Psoas muscle (tissue), 8 donors: ENCODE measurements at regions of chr6 and their contacts with region 1.

Region 1: DNA sequence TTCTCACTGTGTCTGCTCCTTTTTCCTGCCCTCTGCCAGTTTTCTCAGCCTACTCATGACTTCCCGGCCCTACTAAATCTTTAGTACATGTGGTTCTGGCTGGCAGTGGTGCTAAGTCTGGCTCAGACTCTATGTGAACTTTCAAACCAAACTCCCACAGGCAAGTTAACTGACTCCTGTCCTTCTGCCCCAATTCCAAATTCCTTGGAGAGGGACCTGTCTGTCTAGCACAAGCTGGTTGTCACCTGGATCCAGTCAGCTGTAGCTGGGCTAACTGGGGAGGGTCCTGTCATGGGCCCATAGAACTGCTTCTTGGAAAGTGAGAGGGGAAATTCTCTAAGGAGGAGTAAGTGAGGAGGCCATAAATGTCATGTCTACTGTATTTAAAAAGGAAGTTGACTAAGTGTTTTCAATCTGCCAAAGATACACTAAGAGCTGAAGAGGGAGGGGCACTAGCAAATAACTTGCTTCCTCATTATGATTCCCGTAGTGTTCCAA is 240.1 kb downstream of the KCNQ5 start:
- DNase-seq: peak; percentile 44 to 66
- ATAC-seq: peak; percentile 76 to 87 (median 80)
- H3K4me3 ChIP-seq: no peak overlapping the region
- H3K27ac ChIP-seq: peak overlapping the region; percentile 86
- H3K4me1 ChIP-seq: peaks cover 58% of the 10 kb centered on the region
- H3K27me3 ChIP-seq: no peaks in the 10 kb centered on the region
- CTCF ChIP-seq: no peak

Region 2: DNA sequence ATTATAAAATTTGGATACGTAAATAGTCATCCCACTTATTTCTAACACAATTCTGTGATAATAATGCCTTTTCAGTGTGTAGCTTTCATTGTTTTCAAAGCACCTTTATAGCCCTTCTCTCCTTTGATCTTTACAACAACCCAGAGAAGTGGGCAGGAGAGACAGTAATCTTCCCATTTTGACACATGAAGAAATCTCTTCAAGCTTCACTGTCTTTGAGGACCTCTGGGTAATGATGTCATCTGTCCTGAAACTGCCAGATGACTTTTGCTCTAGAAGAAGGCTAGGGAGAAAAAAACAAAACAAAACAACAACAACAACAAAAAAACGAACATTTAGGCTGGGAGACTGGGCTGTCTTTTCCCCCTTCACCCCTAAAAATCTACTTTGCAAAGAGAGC is 37.2 kb before region 1 on chr6:
- intact Hi-C with region 1: loop called in 1 of 2 experiments (anchors 2 kb)
- DNase-seq: no peak
- ATAC-seq: peak in 1 of 4 donors; percentile 35
- H3K4me3 ChIP-seq: no peak overlapping the region
- H3K27ac ChIP-seq: peak overlapping the region; percentile 64
- H3K4me1 ChIP-seq: peaks cover 75% of the 10 kb centered on the region
- H3K27me3 ChIP-seq: no peaks in the 10 kb centered on the region
- CTCF ChIP-seq: no peak

Region 3: GRCh38 chr6:72941751-72942150 is 79.8 kb after region 1 on chr6:
- intact Hi-C with region 1: loop called in 1 of 2 experiments (anchors 5 kb)
- DNase-seq: no peak
- ATAC-seq: no peak
- H3K4me3 ChIP-seq: no peak overlapping the region
- H3K27ac ChIP-seq: peak overlapping the region; percentile 92
- H3K4me1 ChIP-seq: peaks cover 29% of the 10 kb centered on the region
- H3K27me3 ChIP-seq: no peaks in the 10 kb centered on the region
- CTCF ChIP-seq: no peak

Region 4: DNA sequence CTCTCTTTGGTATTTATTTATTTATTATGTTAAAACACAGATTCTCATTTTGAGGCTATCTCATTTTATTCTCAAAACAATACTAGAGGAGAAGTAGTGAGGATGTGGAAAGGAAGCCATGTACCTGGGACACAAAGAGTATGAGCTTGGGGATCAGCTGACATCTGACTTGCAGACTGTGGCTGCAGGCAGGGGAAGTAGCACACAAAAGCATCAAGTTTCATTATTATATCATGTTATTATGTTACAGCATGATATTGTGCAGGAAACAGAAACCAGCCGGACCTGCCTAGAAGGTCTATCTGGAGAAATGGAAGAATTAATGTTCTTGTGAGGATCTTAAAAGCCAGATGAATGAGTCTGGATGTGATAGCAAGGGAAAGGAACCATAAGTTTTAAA is 115.1 kb after region 1 on chr6:
- intact Hi-C with region 1: loop called in 1 of 2 experiments (anchors 10 kb)
- DNase-seq: no peak
- ATAC-seq: peak in 3 of 4 donors; percentile 25 to 57 (median 47)
- H3K4me3 ChIP-seq: no peak overlapping the region
- H3K27ac ChIP-seq: peak overlapping the region; percentile 75
- H3K4me1 ChIP-seq: peaks cover 45% of the 10 kb centered on the region
- H3K27me3 ChIP-seq: no peaks in the 10 kb centered on the region
- CTCF ChIP-seq: no peak